ENCODE measurements at regions of chr2 and their contacts with region 1.

Region 1: DNA sequence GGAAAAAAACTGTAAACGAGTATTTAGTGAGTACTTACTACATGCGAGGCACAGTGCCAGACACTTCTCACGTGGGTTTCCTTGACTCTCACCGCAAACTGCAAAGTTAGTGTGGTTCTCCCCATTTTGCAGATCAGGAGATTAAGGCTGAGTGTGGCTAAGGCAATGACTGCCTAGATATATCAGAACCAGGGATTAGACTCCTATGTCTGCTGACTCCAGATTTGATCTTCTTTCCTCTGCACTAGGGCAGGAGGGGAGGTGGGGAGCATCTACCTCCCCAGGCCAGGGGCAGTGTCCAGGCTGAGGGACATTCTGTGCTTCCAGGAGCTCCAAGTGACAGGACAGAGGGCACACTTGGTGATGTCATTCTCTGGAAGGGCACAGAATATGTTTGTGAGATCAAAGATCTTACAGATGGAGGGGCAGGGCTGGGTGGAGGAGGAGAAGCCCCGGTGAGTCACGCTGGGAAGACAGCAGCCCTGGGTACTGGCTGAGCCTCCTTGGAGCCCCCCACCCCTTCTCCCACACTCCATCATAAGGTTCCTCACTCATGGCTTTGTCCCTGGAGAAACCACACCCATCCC is 92.4 kb downstream of the RHOB start:
- DNase-seq: peak; percentile 48 to 63
- ATAC-seq: peak; percentile 4 to 49 (median 42)
- H3K4me3 ChIP-seq: no peak overlapping the region
- H3K27ac ChIP-seq: peak overlapping the region; percentile 96
- H3K4me1 ChIP-seq: peaks cover 79% of the 10 kb centered on the region
- H3K27me3 ChIP-seq: no peaks in the 10 kb centered on the region
- CTCF ChIP-seq: no peak

Region 2: GRCh38 chr2:20617892-20618467 is 78.8 kb after region 1 on chr2:
- intact Hi-C with region 1: loop called (anchors 2 to 5 kb)
- DNase-seq: peak; percentile 98 to 99
- ATAC-seq: peak; percentile 80 to 83 (median 80)
- H3K4me3 ChIP-seq: no peak overlapping the region
- H3K27ac ChIP-seq: peak overlapping the region; percentile 88
- H3K4me1 ChIP-seq: peaks cover 75% of the 10 kb centered on the region
- H3K27me3 ChIP-seq: no peaks in the 10 kb centered on the region
- CTCF ChIP-seq: peak; percentile 76